GM10248 (cell line): ENCODE measurements at regions of chr3 and their contacts with region 1.

Region 1: DNA sequence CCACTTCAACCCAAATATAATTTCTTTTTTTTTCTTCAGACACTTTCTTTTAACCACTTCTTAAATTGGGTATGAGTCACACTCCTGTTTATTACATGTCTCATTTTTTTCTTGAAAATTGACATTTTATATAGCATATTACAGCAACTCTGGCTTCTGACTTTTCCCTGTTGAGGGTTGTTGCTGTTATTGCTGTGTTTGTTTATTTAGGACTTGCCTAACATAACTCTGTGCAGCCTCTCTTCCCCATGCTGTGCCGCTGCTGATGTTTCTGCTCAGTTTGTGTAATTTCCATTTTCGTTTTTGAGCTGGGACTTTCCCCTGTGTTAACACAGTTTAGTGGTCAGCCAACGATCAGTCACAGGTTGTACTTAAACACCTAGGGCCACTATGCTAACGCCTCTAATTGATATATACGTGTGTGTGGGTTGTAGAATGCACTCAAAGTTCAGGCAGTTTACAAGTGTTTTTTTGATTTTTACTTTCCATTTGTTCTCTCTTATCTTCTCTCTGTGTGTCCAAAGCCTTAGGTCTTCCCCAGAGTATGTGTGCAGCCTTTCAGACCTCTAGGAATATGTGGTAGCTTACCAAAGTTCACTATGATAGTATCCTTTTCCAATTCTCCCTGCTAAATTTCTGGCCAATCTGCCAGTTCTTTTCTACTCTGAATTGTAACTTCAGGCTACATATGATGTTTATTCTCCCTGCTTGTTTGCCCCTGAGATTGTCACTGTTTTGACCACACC is 337.2 kb downstream of the ZBTB20 start:
- DNase-seq: peak; percentile 45
- CTCF ChIP-seq: no peak

Region 2: DNA sequence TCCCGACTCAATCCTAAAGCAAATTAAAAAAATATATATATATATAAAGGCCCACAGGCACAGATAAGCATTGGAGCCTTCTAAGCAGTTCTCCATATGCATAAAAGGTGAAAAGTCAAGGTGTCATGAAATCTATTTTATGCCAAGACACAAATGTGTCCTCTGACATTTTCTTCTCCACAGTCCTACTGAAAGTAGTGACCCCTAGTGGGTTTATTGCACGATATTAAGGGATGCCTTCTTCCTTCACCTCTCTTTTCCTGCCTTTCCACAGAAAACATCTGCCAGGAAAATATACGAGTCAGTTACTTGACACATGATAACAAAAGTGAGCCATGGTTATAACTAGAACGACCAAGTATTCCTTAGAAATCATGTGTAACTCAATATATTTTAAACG is 212.8 kb before region 1 on chr3:
- CTCF ChIA-PET with region 1: no interaction called
- POLR2A ChIA-PET with region 1: no interaction called
- DNase-seq: no peak
- CTCF ChIP-seq: no peak

Region 3: GRCh38 chr3:114827495-114827894 is 17.7 kb after region 1 on chr3:
- CTCF ChIA-PET with region 1: interaction called, 10 read pairs
- POLR2A ChIA-PET with region 1: no interaction called
- DNase-seq: peak; percentile 29
- CTCF ChIP-seq: peak; percentile 53